ENCODE measurements at regions of chr6 and their contacts with region 1.

Region 1: DNA sequence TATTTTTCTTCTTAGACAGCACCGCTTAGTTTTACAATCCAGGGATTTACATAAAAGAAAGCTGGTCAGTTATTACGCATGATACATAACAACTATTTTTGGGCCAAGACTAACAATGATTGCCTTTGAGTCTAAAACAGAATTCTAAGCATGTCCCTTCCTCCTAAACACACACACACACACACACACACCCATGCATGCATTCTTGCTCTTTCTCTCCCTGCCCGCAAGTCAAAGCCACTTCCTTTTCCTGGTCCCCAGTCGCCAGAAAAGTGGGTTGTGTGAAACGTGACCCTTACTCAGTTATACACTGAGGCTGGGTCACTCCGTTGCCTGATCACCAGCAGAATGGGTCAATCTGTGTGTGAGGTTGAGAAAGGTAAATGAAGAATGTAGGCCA is 31.4 kb downstream of the FYN start:
- DNase-seq: peak; percentile 70
- H3K4me3 Mint-ChIP-seq: no peak overlapping the region
- H3K27ac Mint-ChIP-seq: no peak overlapping the region
- H3K4me1 Mint-ChIP-seq: peaks cover 36% of the 10 kb centered on the region
- H3K27me3 Mint-ChIP-seq: no peaks in the 10 kb centered on the region

Region 2: DNA sequence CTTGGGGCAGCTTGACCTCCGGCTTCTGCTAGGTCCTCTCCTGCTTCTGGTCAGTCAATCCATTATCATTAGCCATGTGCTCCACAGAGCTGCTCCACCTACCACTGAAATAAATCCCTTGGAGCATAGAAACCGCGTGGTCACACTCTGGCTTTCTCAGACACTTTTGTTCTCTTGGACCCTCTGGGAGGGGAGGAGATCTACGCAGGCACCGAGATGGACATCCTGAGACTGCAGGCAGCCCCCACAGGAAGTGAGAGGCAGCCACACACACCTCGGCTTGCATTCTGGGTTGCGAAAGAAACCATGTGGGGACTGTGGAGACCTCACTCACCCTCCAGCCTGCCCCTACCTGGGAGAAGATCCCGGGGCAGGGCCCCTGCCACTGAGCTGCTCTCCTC is 48.1 kb before region 1 on chr6:
- CTCF ChIA-PET with region 1: no interaction called
- intact Hi-C with region 1: loop called (anchors 1 kb)
- DNase-seq: peak; percentile 60
- H3K4me3 Mint-ChIP-seq: peak overlapping the region; percentile 42
- H3K27ac Mint-ChIP-seq: peak overlapping the region; percentile 88
- H3K4me1 Mint-ChIP-seq: peaks cover 75% of the 10 kb centered on the region
- H3K27me3 Mint-ChIP-seq: no peaks in the 10 kb centered on the region

Region 3: GRCh38 chr6:111812060-111813038 is 29.5 kb before region 1 on chr6:
- CTCF ChIA-PET with region 1: interaction called, 6 read pairs
- intact Hi-C with region 1: loop called (anchors 1 kb)
- DNase-seq: no peak
- H3K4me3 Mint-ChIP-seq: no peak overlapping the region
- H3K27ac Mint-ChIP-seq: peak overlapping the region; percentile 93
- H3K4me1 Mint-ChIP-seq: peaks cover 82% of the 10 kb centered on the region
- H3K27me3 Mint-ChIP-seq: no peaks in the 10 kb centered on the region

Region 4: DNA sequence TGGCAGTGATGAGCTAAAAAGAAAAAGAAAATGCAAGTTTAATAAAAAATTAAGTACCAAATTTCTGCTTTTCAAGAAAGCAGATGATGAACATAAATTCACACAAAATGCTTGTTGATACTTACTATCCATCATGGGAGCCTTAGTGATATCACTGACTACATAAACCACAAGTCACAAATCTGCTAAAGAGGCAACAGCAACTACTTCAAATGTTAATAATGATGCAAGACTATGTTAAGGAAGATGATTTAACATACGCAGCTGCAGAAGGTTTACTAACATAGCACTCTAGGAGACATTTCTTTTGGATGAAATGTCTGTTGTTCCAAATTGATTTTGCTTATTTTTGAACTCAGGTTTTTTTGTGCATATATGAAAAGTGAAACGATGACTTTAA is 12.9 kb after region 1 on chr6:
- CTCF ChIA-PET with region 1: interaction called, 6 read pairs
- intact Hi-C with region 1: loop called (anchors 1 kb)
- DNase-seq: no peak
- H3K4me3 Mint-ChIP-seq: no peak overlapping the region
- H3K27ac Mint-ChIP-seq: no peak overlapping the region
- H3K4me1 Mint-ChIP-seq: peaks cover 94% of the 10 kb centered on the region
- H3K27me3 Mint-ChIP-seq: no peaks in the 10 kb centered on the region

Region 5: GRCh38 chr6:111973118-111973761 is 131.4 kb after region 1 on chr6:
- CTCF ChIA-PET with region 1: interaction called, 3 read pairs
- intact Hi-C with region 1: loop called (anchors 1 kb)
- DNase-seq: peak; percentile 84
- H3K4me3 Mint-ChIP-seq: peak overlapping the region; percentile 70
- H3K27ac Mint-ChIP-seq: peak overlapping the region; percentile 96
- H3K4me1 Mint-ChIP-seq: peaks cover 70% of the 10 kb centered on the region
- H3K27me3 Mint-ChIP-seq: no peaks in the 10 kb centered on the region

Region 6: GRCh38 chr6:112232845-112233256 is 391.0 kb after region 1 on chr6:
- CTCF ChIA-PET with region 1: no interaction called
- intact Hi-C with region 1: no loop called
- DNase-seq: no peak
- H3K4me3 Mint-ChIP-seq: no peak overlapping the region
- H3K27ac Mint-ChIP-seq: no peak overlapping the region
- H3K4me1 Mint-ChIP-seq: peaks cover 9% of the 10 kb centered on the region
- H3K27me3 Mint-ChIP-seq: peaks cover 7% of the 10 kb centered on the region

Measured in activated naive CD4-positive, alpha-beta T cell treated with anti-CD3 and anti-CD28 coated beads for 36 hours (primary cell).